Cardiac septum (tissue), 1 donor: ENCODE measurements at regions of chr6 and their contacts with region 1.

Region 1: GRCh38 chr6:6494677-6495076 is 93.8 kb upstream of the LY86 start:
- DNase-seq: peak; percentile 81

Region 2: DNA sequence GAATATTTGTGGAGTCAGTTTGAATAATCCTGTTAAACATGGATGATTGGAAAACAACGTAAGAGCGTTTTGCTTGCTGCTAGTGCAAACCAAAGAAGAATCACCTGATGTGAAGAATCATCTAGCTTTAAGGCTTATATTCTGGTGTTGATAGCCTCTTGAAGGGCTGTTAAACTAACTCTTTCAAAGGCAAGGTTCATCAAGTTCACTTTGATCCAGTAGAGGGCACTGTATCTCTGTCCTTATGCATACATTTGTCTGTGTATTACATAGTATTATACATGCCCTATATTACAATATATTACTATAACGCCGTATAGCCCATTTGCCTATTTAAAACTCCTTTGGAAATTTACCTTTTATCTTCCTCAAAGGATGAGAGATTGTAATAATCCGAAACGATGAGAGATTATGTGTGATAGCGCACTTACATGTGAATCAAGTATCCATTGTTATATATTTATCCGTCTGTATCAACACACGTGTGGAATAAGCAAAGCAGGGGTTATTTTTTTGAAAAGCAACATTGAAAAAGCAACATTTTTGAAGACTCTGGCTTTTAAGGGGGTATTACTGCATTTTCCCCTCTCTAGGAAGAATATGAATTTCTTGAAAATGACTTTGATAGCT is 437.1 kb before region 1 on chr6:
- intact Hi-C with region 1: loop called (anchors 10 kb)
- DNase-seq: no peak

Region 3: GRCh38 chr6:6547110-6547879 is 52.6 kb after region 1 on chr6:
- intact Hi-C with region 1: no loop called
- DNase-seq: peak; percentile 94